OCI-LY7 (cell line): ENCODE measurements at regions of chr6 and their contacts with region 1.

Region 1: GRCh38 chr6:100479179-100480035 is 14.7 kb upstream of the SIM1 start:
- DNase-seq: peak; percentile 45
- H3K4me3 ChIP-seq: no peak overlapping the region
- H3K27ac ChIP-seq: no peak overlapping the region
- H3K4me1 ChIP-seq: no peaks in the 10 kb centered on the region
- CTCF ChIP-seq: peak; percentile 89

Region 2: DNA sequence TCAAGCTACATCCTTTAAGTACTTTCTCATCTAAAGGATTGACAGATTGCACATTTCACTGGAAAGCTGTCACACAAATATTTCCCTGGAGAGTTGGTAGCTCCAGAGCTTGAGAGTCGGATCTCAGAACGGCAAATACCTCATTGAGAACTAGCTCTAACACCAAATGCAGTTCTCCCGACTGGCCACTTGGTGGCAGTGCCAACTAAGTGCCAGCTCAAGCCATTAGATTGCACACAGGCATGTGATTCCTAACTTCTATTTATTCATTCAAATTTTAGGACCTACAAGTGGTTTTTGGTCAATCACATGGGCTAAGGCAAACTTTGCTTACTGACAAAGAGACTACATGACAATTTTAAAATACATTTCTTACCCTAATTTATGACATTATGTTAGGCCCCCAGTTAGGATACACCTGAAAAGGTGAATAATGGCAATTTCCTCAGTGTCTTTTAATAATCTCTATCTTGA is 477.5 kb before region 1 on chr6:
- CTCF ChIA-PET with region 1: no interaction called
- POLR2A ChIA-PET with region 1: no interaction called
- intact Hi-C with region 1: loop called (anchors 5 kb)
- DNase-seq: peak; percentile 58
- H3K4me3 ChIP-seq: no peak overlapping the region
- H3K27ac ChIP-seq: no peak overlapping the region
- H3K4me1 ChIP-seq: no peaks in the 10 kb centered on the region
- CTCF ChIP-seq: peak; percentile 93

Region 3: DNA sequence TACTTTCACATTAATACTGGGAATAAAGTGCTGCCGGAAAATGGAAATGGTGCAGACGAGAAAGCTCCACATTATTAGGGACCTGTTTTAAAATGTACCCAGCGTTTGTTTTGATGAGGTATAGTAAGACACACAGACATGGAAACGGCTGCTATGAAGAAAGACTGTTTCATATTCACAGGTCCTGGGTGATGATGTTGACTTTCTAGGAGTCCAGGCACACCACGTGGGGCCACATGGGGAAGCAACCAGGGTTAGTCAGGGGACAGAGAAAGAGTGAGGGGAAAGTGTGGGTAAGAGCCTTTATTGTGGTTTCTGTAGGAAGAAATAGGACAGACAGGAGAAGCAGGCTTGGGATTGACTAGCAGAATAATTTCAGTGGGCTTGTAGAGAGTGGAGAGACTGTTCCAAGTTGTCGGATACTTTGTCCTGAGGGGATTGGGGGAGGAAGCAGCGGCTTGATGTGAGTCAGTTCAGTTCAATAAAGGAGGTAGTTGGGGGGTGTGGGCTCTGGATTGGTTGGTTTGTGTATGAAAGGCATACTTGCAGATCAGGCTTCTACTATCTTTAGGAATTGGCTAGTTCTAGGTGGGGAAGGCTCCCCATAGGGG is 373.4 kb before region 1 on chr6:
- CTCF ChIA-PET with region 1: no interaction called
- POLR2A ChIA-PET with region 1: no interaction called
- intact Hi-C with region 1: loop called (anchors 2 kb)
- DNase-seq: no peak
- H3K4me3 ChIP-seq: no peak overlapping the region
- H3K27ac ChIP-seq: no peak overlapping the region
- H3K4me1 ChIP-seq: no peaks in the 10 kb centered on the region
- CTCF ChIP-seq: no peak

Region 4: DNA sequence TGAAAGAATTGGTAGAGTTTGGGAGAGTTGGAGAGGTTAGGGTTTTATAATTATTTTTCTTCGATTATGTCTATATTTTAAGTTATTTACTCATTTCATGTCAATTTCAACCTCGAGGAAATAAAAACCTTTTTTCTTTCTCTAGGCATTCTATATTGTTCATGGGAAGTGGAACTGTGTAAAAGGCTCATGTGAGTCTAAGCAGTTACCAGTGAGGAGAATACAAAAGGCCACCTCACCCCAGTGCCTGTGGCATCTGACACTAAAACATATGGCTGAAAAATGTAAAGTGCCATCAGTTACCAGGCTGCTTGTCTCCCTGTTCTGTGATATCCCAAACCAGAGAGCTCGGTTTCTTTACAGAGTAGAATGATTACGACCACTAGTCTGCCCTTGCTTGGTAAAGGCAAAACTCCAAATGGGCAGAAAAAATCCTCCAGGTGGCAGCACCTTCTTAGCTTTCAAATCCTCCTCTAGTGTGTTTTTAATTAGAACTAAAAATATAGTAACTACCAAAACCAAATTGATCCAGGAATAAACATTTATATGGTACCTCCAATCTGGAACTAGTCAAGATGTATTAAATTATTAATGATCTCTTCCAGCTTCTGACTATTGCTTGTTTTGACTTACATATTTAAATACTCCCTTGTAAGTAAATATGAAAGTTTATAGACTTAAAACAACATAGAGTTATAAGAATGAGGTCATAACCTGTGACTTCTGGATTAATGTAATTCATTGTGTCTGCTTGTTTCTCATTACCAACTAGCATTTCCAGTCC is 362.8 kb before region 1 on chr6:
- CTCF ChIA-PET with region 1: no interaction called
- POLR2A ChIA-PET with region 1: no interaction called
- intact Hi-C with region 1: loop called (anchors 1 kb)
- DNase-seq: peak; percentile 44
- H3K4me3 ChIP-seq: no peak overlapping the region
- H3K27ac ChIP-seq: no peak overlapping the region
- H3K4me1 ChIP-seq: no peaks in the 10 kb centered on the region
- CTCF ChIP-seq: peak; percentile 84

Region 5: GRCh38 chr6:100176311-100176950 is 303.0 kb before region 1 on chr6:
- CTCF ChIA-PET with region 1: no interaction called
- POLR2A ChIA-PET with region 1: no interaction called
- intact Hi-C with region 1: loop called (anchors 5 kb)
- DNase-seq: peak; percentile 2
- H3K4me3 ChIP-seq: no peak overlapping the region
- H3K27ac ChIP-seq: no peak overlapping the region
- H3K4me1 ChIP-seq: no peaks in the 10 kb centered on the region
- CTCF ChIP-seq: peak; percentile 55; the same call in 1 of the 2 replicates

Region 6: GRCh38 chr6:100664274-100665040 is 185.1 kb after region 1 on chr6:
- CTCF ChIA-PET with region 1: no interaction called
- POLR2A ChIA-PET with region 1: no interaction called
- intact Hi-C with region 1: loop called (anchors 5 kb)
- DNase-seq: peak; percentile 41
- H3K4me3 ChIP-seq: no peak overlapping the region
- H3K27ac ChIP-seq: no peak overlapping the region
- H3K4me1 ChIP-seq: no peaks in the 10 kb centered on the region
- CTCF ChIP-seq: peak; percentile 84